Activated B cell treated with CpG ODN at 0.5 μM for 24 hours (primary cell): ENCODE measurements at regions of chr1 and their contacts with region 1.

Region 1: GRCh38 chr1:212070720-212071302 is 35.3 kb downstream of the DTL start:
- DNase-seq: no peak
- ATAC-seq: peak; percentile 47
- H3K4me3 Mint-ChIP-seq: no peak overlapping the region
- H3K27ac Mint-ChIP-seq: no peak overlapping the region
- H3K4me1 Mint-ChIP-seq: no peaks in the 10 kb centered on the region
- H3K27me3 Mint-ChIP-seq: no peaks in the 10 kb centered on the region
- CTCF ChIP-seq: no peak

Region 2: GRCh38 chr1:211944733-211945500 is 125.9 kb before region 1 on chr1:
- CTCF ChIA-PET with region 1: no interaction called
- POLR2A ChIA-PET with region 1: no interaction called
- intact Hi-C with region 1: no loop called
- DNase-seq: no peak
- ATAC-seq: no peak
- H3K4me3 Mint-ChIP-seq: no peak overlapping the region
- H3K27ac Mint-ChIP-seq: no peak overlapping the region
- H3K4me1 Mint-ChIP-seq: peaks cover 17% of the 10 kb centered on the region
- H3K27me3 Mint-ChIP-seq: no peaks in the 10 kb centered on the region
- CTCF ChIP-seq: no peak

Region 3: GRCh38 chr1:211965108-211965805 is 105.6 kb before region 1 on chr1:
- CTCF ChIA-PET with region 1: no interaction called
- POLR2A ChIA-PET with region 1: no interaction called
- intact Hi-C with region 1: no loop called
- DNase-seq: no peak
- ATAC-seq: no peak
- H3K4me3 Mint-ChIP-seq: no peak overlapping the region
- H3K27ac Mint-ChIP-seq: peak overlapping the region; percentile 14
- H3K4me1 Mint-ChIP-seq: peaks cover 6% of the 10 kb centered on the region
- H3K27me3 Mint-ChIP-seq: no peaks in the 10 kb centered on the region
- CTCF ChIP-seq: no peak

Region 4: DNA sequence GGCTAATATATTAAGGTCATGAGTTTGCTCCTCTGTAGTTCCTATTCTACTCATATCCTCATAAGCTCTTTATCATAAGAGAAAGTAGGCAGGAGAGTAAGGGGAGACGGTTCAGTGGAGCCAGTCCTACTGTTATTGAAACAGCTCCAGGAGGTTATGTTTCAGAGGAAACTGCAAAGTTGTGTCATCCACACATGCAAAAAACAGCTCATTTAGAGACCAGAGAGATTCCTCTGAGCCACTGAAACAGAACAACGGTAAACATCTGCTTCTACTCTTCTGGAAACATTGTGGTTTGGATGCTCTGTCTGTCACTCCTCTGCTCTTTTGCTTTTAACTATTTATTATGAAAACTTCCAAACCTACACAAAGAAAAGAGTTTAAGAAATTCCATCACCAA is 148.1 kb after region 1 on chr1:
- CTCF ChIA-PET with region 1: no interaction called
- POLR2A ChIA-PET with region 1: no interaction called
- intact Hi-C with region 1: no loop called
- DNase-seq: no peak
- ATAC-seq: peak; percentile 45
- H3K4me3 Mint-ChIP-seq: no peak overlapping the region
- H3K27ac Mint-ChIP-seq: no peak overlapping the region
- H3K4me1 Mint-ChIP-seq: peaks cover 10% of the 10 kb centered on the region
- H3K27me3 Mint-ChIP-seq: peaks cover 8% of the 10 kb centered on the region
- CTCF ChIP-seq: no peak

Region 5: DNA sequence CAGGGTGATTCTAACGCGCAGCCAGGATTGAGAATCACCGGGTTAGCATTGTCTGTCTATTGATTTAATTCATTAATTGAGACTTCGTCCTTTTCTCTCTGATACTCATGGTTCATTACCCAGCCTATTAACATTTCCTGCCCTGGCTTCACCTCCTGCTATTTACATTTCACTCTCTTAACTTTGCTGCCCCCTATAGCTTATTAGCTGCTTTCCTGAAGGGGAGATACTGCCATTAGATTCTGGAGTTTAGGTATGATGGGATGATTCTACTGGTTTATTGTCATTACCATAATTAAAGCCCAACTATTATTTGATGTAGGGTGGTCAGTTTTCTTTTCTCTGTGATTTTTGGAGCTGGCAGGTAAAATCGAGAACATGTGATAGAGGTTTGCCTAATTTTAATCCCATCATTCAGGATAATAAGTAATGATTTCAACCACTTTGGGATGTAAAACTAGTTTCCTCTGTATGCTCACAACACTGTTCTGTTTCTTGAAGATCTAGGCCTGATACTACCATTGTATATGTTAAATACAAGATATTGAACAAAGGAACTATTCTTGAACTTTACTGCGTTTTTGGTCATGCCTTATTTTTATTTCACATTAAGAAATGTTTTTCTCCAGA is 220.8 kb after region 1 on chr1:
- CTCF ChIA-PET with region 1: interaction called, 53 read pairs
- POLR2A ChIA-PET with region 1: interaction called, 8 read pairs
- intact Hi-C with region 1: loop called (anchors 1 kb)
- DNase-seq: no peak
- ATAC-seq: peak; percentile 91
- H3K4me3 Mint-ChIP-seq: peak overlapping the region; percentile 2
- H3K27ac Mint-ChIP-seq: no peak overlapping the region
- H3K4me1 Mint-ChIP-seq: peaks cover 78% of the 10 kb centered on the region
- H3K27me3 Mint-ChIP-seq: no peaks in the 10 kb centered on the region
- CTCF ChIP-seq: peak; percentile 44

Region 6: DNA sequence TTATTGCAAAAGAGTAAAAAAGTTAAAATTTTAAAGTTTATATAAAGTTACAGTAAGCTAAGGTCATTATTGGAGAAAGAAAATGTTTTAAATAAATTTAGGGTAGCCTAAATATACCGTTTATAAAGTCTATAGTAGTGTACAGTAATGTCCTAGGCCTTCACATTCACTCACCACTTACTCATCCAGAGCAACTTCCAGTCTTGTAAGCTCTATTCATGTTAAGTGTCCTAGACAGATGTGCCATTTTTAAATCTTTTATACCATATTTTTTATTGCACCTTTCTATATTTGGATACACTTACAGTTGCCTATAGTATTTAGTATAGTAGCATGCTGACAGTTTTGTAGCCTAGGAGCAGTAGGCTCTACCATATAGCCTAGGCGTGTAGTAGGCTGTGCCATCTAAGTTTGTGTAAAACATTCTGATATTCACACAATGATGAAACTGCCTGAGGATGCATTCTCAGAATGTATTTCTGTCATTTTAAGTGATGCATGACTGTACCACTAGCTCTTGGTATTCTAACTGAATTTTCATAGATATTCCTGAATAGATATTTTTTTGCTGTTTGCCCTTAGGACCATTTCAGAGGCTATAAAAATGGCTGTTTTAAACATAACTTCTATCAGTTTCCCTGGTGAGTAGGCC is 241.2 kb after region 1 on chr1:
- CTCF ChIA-PET with region 1: interaction called, 16 read pairs
- POLR2A ChIA-PET with region 1: no interaction called
- intact Hi-C with region 1: no loop called
- DNase-seq: no peak
- ATAC-seq: no peak
- H3K4me3 Mint-ChIP-seq: no peak overlapping the region
- H3K27ac Mint-ChIP-seq: no peak overlapping the region
- H3K4me1 Mint-ChIP-seq: peaks cover 39% of the 10 kb centered on the region
- H3K27me3 Mint-ChIP-seq: no peaks in the 10 kb centered on the region
- CTCF ChIP-seq: no peak

Region 7: DNA sequence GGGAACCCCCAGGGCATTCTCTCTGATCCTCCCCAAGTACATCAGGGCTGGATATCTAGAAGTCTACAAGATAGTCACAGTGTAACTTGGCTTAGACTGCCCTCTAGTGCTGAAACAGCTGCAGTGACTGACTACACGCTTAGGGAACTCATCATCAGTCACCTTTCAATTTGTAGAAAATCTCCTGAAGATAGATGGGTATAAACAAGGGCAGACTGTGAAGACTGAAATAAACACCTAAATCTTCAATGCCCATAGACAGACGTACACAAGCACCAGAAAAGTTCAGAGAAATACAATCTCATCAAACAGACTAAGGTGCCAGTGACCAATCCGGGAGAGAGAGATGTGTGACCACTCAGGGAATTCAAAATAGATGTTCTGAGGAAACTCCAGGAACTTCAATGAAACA is 297.3 kb after region 1 on chr1:
- CTCF ChIA-PET with region 1: interaction called, 87 read pairs
- POLR2A ChIA-PET with region 1: interaction called, 4 read pairs
- intact Hi-C with region 1: loop called (anchors 1 kb)
- DNase-seq: no peak
- ATAC-seq: peak; percentile 89
- H3K4me3 Mint-ChIP-seq: no peak overlapping the region
- H3K27ac Mint-ChIP-seq: no peak overlapping the region
- H3K4me1 Mint-ChIP-seq: no peaks in the 10 kb centered on the region
- H3K27me3 Mint-ChIP-seq: no peaks in the 10 kb centered on the region
- CTCF ChIP-seq: peak; percentile 25

Region 8: DNA sequence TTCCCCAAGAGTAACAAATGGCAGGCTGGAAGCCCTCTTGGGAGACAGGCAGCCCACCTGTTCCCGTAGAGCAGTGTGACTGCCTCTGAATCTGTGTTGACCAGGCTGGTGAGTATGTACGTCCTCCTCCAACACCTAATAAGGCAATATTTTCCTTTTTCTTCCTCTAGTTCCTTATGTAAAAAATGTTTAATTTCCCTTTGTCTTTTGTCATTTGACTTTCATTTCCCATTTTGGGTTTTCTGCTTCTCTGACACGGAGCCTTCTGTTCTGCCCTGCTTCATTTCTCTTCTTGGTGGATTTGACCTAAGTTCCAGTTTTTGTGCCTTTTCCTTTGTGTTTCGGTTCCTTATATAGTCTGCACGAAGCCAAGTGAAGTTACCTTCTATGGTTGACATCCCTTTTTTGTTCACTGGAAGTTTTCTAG is 472.0 kb after region 1 on chr1:
- CTCF ChIA-PET with region 1: no interaction called
- POLR2A ChIA-PET with region 1: no interaction called
- intact Hi-C with region 1: no loop called
- DNase-seq: no peak
- ATAC-seq: peak; percentile 89
- H3K4me3 Mint-ChIP-seq: peak overlapping the region; percentile 8
- H3K27ac Mint-ChIP-seq: peak overlapping the region; percentile 15
- H3K4me1 Mint-ChIP-seq: peaks cover 18% of the 10 kb centered on the region
- H3K27me3 Mint-ChIP-seq: no peaks in the 10 kb centered on the region
- CTCF ChIP-seq: no peak